ENCODE measurements at regions of chr7 and their contacts with region 1.

Region 1: DNA sequence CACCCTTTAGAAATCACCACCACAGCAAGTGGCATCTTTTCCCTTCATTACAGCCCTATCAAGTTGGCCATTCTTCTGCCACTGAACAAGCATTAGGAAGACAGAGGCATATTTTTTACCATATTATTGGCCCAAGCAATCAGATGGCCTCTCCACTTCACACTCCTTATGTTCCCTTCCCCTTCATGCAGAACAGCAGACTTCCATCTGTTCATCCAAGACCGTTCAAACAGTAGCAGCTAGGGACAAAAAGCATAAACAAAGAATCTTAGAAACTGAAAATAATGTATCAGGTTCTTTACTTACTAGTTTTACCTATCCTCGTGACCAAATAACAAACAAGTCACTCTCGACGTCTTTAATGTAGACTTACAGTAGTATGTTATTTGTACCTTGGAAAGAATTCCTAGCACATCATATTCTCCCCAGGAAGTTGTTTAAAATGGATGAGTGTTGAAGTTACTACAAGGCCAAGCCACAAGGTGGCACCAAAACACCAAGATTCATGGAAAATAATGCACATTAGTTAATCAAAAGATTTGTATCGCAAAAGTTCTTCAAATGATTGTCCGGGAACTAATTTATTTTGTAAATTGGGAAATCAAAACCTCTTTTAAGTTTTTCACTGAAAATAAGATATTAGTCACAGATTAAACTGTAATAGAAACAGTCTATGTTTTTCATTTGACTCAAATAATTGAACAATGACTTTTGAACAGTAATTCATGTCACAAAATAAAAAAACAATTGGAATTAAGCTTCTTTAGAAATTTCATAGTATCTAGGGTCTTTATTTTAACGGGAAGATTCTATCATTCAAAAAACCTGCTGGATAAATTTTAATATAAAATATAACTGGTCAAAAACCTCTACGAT is 112.1 kb downstream of the VPS41 start:
- DNase-seq: peak; percentile 40
- H3K4me3 Mint-ChIP-seq: no peak overlapping the region
- H3K27ac Mint-ChIP-seq: no peak overlapping the region
- H3K4me1 Mint-ChIP-seq: no peaks in the 10 kb centered on the region
- H3K27me3 Mint-ChIP-seq: no peaks in the 10 kb centered on the region

Region 2: GRCh38 chr7:38889861-38890432 is 93.1 kb after region 1 on chr7:
- CTCF ChIA-PET with region 1: no interaction called
- POLR2A ChIA-PET with region 1: no interaction called
- intact Hi-C with region 1: no loop called
- DNase-seq: no peak
- H3K4me3 Mint-ChIP-seq: no peak overlapping the region
- H3K27ac Mint-ChIP-seq: no peak overlapping the region
- H3K4me1 Mint-ChIP-seq: peaks cover 19% of the 10 kb centered on the region
- H3K27me3 Mint-ChIP-seq: no peaks in the 10 kb centered on the region

Region 3: GRCh38 chr7:38908759-38909335 is 112.0 kb after region 1 on chr7 and contains the start of gene VPS41:
- CTCF ChIA-PET with region 1: no interaction called
- POLR2A ChIA-PET with region 1: no interaction called
- intact Hi-C with region 1: loop called (anchors 5 kb)
- DNase-seq: peak; percentile 86
- H3K4me3 Mint-ChIP-seq: peak within 1 kb of the TSS; percentile 91
- H3K27ac Mint-ChIP-seq: peak within 1 kb of the TSS; percentile 68
- H3K4me1 Mint-ChIP-seq: peaks cover 37% of the 10 kb centered on the region
- H3K27me3 Mint-ChIP-seq: no peaks in the 10 kb centered on the region
- total RNA-seq, gene VPS41: 62.9 to 66.8 TPM

Region 4: DNA sequence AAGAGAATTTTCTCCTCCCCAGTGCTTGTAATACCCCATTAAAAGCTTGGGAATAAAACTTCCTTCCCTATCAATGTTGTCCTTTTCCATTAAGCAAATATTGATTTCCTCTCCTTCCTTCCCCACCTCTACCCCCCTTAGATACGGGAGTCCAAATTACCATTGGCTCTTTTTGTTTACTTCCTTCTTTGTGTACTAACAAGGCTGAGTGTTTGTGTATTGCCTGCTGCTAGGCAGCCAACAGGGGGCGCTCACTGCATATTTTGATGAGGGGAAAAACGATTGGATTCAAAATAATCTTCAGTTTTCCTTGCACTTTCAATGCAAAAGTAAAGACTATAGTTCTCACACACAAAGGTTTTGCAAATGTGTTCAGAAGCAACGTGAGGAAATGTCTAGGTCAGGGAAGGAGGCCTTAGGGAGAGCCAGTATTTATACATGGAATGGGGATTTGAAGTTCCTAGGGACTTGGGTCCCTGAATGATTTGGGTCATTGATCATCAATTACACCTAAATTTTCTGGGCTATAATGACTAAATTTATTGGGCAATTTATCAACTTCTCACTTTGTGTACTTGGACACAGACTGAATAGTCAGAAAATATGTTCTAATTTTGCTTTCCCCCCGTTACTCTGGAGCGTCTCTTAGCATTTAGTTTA is 135.8 kb after region 1 on chr7:
- CTCF ChIA-PET with region 1: no interaction called
- POLR2A ChIA-PET with region 1: no interaction called
- intact Hi-C with region 1: loop called (anchors 5 kb)
- DNase-seq: peak; percentile 65
- H3K4me3 Mint-ChIP-seq: no peak overlapping the region
- H3K27ac Mint-ChIP-seq: no peak overlapping the region
- H3K4me1 Mint-ChIP-seq: no peaks in the 10 kb centered on the region
- H3K27me3 Mint-ChIP-seq: peaks cover 5% of the 10 kb centered on the region

Region 5: DNA sequence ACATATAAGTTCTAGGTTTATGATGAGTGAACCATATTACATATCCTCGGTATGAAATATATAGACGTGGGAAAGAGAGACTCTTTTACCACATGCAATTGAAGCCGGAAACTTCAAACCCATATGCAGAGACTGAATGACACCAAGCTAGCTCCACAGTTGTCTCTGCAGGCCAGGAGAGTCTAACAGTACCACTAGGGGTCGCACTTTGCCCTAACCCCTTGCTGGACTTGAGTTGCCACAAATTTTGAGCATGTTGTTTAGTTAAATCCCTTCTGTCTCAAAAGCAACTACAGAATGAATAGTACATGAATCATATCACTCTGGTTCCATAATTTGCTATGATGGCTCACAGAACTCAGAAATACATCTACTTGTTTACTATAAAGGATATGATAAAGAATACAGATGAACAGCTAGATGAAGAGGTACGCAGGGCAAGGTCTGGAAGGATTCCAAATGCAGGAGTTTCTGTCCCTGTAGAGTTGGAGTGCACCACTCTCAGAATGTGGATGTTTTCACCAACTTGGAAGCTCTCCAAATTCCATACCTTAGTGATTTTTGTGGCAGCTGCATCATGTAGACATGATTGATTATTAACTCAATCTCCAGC is 657.0 kb after region 1 on chr7:
- CTCF ChIA-PET with region 1: interaction called, 3 read pairs
- POLR2A ChIA-PET with region 1: no interaction called
- intact Hi-C with region 1: loop called (anchors 5 kb)
- DNase-seq: peak; percentile 68
- H3K4me3 Mint-ChIP-seq: no peak overlapping the region
- H3K27ac Mint-ChIP-seq: no peak overlapping the region
- H3K4me1 Mint-ChIP-seq: no peaks in the 10 kb centered on the region
- H3K27me3 Mint-ChIP-seq: peaks cover 3% of the 10 kb centered on the region

Region 6: DNA sequence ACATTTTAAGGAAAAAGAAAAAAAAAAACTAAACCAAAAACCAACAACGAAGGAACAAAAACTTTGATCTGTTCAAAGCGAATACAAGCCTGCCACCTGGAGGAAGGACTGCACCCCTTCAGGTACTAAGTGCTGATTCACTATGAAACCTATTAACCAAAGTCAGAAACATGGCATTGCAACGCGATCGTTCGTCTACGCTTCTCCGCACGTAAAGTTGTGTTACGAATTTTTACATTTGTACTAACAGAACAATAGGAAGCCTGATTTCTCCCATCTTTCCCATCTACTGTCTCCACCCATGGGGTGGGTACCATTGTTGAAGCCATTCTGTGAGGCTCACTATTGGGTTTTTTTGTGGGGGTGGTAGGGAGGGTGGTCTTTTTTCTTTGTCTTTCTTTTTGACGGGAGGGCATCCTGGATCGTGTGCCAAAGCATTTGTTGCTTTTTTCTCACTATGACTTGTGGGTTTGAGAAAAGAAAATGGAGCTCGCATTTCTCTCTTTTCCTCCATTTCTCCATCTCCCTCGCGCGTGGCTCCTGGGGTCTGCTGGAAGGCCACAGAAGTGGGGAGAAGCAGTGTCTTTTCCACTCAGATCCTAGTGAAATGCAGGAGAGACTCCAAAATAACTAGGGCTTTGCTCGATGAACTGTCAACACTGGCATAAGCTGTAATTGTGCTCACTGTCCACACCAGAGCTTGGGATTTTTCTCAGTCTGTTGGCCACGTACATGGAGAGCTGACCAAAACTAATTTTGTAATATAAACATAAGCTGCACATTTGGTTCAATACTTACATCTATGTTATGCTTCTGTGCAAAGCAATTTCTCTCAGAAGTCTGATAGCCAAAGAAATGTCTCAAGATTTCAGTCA is 668.4 kb after region 1 on chr7:
- CTCF ChIA-PET with region 1: interaction called, 5 read pairs
- POLR2A ChIA-PET with region 1: no interaction called
- intact Hi-C with region 1: loop called (anchors 1 kb)
- DNase-seq: peak; percentile 53
- H3K4me3 Mint-ChIP-seq: no peak overlapping the region
- H3K27ac Mint-ChIP-seq: no peak overlapping the region
- H3K4me1 Mint-ChIP-seq: no peaks in the 10 kb centered on the region
- H3K27me3 Mint-ChIP-seq: peaks cover 9% of the 10 kb centered on the region

Region 7: GRCh38 chr7:39517240-39517639 is 720.4 kb after region 1 on chr7:
- CTCF ChIA-PET with region 1: interaction called, 4 read pairs
- POLR2A ChIA-PET with region 1: no interaction called
- intact Hi-C with region 1: loop called (anchors 1 kb)
- DNase-seq: no peak
- H3K4me3 Mint-ChIP-seq: no peak overlapping the region
- H3K27ac Mint-ChIP-seq: no peak overlapping the region
- H3K4me1 Mint-ChIP-seq: no peaks in the 10 kb centered on the region
- H3K27me3 Mint-ChIP-seq: peaks cover 4% of the 10 kb centered on the region

Measured in activated CD4-positive, alpha-beta memory T cell treated with anti-CD3 and anti-CD28 coated beads for 36 hours (primary cell).